Heart left ventricle (tissue), 16 donors: ENCODE measurements at regions of chr12 and their contacts with region 1.

Region 1: DNA sequence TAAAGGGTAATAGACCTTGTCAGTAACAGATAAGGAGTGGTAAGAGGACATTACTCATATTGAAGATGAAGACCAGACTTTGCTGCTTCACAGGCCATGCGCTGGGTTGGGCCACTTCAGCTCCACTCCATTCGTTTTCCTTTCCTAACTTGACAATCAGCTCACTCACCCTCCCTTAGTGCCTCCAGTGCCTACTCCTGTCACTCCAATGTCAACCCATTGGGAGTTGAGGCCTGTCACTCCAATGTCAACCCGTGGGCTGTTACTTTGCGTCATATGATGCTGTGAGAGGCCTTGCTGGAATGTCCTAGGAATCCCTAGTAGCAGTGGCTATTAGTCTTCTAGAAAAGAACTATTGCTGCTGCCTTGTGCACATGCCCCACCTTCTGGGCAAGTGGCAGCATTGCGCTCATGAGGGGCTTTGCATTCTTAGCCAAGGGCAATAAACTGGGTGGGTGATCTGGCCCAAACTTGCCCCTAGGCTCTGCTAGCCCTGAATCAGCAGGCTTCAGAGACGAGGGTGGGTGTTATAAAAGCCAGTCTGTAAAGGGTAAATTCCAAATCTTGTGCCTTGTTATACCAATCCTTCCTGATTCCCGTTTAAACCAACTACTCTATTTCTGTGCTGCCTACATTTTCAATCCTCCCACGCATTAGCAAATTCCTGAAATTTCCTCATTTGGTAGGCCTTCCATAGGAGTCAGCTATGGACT is 36.1 kb downstream of the BAZ2A start:
- DNase-seq: peak in 1 of 5 donors; percentile 42
- ATAC-seq: peak; percentile 48 to 79 (median 66)
- H3K4me3 ChIP-seq: no peak overlapping the region
- H3K27ac ChIP-seq: peak overlapping the region in 10 of 12 donors; percentile 10 to 59 (median 30)
- H3K4me1 ChIP-seq: peaks cover 0 to 23% (median 7%) of the 10 kb centered on the region in 12 donors
- H3K27me3 ChIP-seq: no peaks in the 10 kb centered on the region
- CTCF ChIP-seq: peak; percentile 58 to 79 (median 72)
- POLR2A ChIP-seq: no peak

Region 2: GRCh38 chr12:56630160-56630632 is 36.1 kb after region 1 on chr12 and contains the start of gene BAZ2A:
- intact Hi-C with region 1: loop called in 1 of 10 experiments (anchors 5 kb)
- DNase-seq: peak; percentile 91 to 93 (median 93)
- ATAC-seq: peak; percentile 79 to 90 (median 87)
- H3K4me3 ChIP-seq: peak within 1 kb of the TSS; percentile 80 to 100 (median 98)
- H3K27ac ChIP-seq: peak within 1 kb of the TSS; percentile 84 to 98 (median 94)
- H3K4me1 ChIP-seq: peaks cover 18 to 78% (median 63%) of the 10 kb centered on the region in 12 donors
- H3K27me3 ChIP-seq: no peaks in the 10 kb centered on the region
- CTCF ChIP-seq: no peak
- POLR2A ChIP-seq: no peak
- total RNA-seq, gene BAZ2A: 28.0 to 71.5 (median 44.5) TPM